ENCODE measurements at regions of chr1 and their contacts with region 1.

Region 1: GRCh38 chr1:200510228-200510623 is 100.4 kb upstream of the ZNF281 start:
- DNase-seq: peak; percentile 82
- CTCF ChIP-seq: peak; percentile 76

Region 2: DNA sequence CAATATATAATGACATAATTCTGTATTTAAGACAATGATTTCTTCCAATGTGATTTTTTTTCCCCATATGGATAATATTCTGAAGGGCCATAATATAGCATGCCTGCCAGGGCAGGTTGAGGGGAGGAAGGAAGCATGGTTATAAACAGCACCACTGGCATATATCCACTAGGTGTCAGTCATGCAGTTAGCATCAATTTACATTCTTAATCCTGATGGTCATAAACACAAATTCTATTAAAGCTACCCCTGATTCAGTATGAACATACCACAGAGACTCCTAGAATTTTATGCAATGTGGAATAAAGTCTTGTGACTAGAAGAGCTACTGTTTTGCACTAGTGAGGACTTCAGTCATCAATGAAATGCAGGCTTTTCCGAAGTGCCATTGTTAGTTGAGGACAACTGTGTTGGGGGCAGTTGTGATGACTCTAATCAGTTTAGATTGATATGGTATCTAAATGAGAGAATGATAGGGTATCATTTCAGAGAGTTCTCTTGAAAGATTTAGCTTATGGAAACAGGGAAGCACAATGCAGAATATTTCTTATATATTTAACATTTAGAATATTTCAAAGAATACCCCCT is 825.4 kb before region 1 on chr1:
- CTCF ChIA-PET with region 1: interaction called, 26 read pairs
- POLR2A ChIA-PET with region 1: no interaction called
- DNase-seq: peak; percentile 28
- CTCF ChIP-seq: peak; percentile 75

Region 3: GRCh38 chr1:200488375-200489165 is 21.7 kb before region 1 on chr1:
- CTCF ChIA-PET with region 1: interaction called, 36 read pairs
- POLR2A ChIA-PET with region 1: no interaction called
- DNase-seq: peak; percentile 66
- CTCF ChIP-seq: peak; percentile 86

Region 4: GRCh38 chr1:200496937-200497336 is 13.3 kb before region 1 on chr1:
- CTCF ChIA-PET with region 1: interaction called, 36 read pairs
- POLR2A ChIA-PET with region 1: no interaction called
- DNase-seq: no peak
- CTCF ChIP-seq: no peak

Region 5: GRCh38 chr1:200524092-200524491 is 13.9 kb after region 1 on chr1:
- CTCF ChIA-PET with region 1: interaction called, 11 read pairs
- POLR2A ChIA-PET with region 1: no interaction called
- DNase-seq: no peak
- CTCF ChIP-seq: no peak

Region 6: DNA sequence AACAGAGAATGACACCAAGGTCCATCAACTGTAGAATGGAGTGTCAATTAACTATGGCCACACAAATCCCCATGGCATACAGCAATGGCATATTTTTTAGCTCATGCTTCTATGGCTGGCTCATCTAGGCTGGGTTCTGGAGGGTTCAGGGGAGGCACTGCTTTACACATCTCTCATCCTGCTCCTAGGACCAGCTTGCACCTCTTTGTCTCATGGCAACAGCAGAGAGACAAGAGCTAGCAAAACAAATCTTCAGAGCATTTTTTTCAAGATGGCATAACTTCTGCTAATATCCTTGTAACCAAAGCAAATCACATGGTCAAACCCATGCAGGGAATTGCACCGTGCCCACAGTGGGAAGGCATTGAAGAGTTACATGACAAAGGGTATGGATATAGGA is 28.0 kb after region 1 on chr1:
- CTCF ChIA-PET with region 1: interaction called, 16 read pairs
- POLR2A ChIA-PET with region 1: no interaction called
- DNase-seq: no peak
- CTCF ChIP-seq: no peak

Region 7: DNA sequence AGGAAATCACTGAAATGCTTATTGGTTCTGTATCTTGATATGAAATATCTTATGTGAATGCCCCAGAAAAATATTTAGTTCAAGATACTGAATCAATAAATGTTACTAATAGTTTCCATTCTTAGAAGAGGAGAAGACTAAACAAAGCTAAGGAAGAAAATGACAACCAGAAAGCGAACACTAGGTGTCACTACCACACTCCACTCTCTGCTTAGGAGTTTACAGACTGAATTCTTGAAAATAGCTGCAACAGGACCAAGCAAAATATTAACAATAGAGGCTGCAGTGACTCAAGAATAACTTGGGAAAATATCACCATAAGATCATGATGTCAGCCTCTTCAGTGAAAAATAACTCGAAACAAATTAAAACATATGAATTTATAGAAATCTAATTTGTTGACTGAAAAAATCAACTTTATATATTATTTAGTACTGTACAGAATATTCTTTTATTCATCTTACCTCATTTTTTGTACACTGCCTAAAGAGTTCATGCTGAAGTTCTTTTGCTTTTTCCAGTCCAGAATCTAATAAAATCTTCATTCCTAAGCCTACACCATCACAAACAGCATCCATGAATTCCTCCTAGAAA is 48.7 kb after region 1 on chr1:
- CTCF ChIA-PET with region 1: no interaction called
- POLR2A ChIA-PET with region 1: no interaction called
- DNase-seq: peak; percentile 46
- CTCF ChIP-seq: peak; percentile 58